MCF 10A (cell line): ENCODE measurements at regions of chr1 and their contacts with region 1.

Region 1: DNA sequence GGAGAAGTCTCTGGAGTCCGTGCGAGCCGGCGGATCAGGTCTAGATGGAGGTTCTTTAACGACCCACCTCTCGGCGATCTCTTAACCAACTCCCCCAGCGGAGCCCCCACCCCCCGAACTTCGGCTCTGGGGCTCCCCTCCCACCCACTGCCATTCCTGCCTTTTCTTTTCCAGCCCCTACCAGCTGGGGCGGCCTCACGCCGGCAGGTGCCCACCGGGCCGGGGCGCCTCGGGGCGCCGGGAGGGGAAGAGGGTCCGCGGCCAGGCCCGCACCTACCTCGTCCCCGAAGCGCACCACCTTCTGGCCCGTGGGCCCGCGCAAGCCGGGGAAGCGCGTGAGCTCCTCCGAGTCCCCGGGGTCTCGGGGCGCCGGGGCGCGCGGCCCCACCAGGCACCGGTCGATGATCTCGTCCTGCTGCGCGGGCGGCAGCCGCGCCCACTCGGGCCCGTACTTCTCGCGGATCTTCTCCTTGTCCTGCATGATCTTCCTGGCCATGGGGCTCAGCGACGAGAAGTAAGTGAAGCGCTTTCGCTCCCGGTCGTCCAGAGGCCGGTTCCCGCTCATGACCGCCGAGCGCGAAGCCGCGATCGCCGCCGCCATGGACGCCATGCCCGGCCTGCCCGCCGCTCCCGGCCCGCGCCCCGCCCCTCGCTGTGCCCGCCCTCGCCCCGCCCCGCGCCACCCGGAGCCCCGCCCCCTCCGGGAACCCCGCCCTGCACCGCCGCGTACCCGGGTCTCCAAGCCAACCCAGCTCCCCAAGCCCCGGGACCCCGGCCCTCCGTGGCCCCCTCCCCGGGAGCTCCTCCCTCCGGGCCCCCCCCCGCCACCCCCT is at the start of gene C1orf198:
- DNase-seq: peak; percentile 65
- H3K4me3 Mint-ChIP-seq: peak within 1 kb of the TSS; percentile 79
- H3K27ac Mint-ChIP-seq: peak within 1 kb of the TSS; percentile 69
- H3K4me1 Mint-ChIP-seq: peaks cover 22% of the 10 kb centered on the region
- H3K27me3 Mint-ChIP-seq: no peaks in the 10 kb centered on the region
- CTCF ChIP-seq: no peak
- total RNA-seq, gene C1orf198: 13.7 and 19.2 TPM in 2 replicates

Region 2: DNA sequence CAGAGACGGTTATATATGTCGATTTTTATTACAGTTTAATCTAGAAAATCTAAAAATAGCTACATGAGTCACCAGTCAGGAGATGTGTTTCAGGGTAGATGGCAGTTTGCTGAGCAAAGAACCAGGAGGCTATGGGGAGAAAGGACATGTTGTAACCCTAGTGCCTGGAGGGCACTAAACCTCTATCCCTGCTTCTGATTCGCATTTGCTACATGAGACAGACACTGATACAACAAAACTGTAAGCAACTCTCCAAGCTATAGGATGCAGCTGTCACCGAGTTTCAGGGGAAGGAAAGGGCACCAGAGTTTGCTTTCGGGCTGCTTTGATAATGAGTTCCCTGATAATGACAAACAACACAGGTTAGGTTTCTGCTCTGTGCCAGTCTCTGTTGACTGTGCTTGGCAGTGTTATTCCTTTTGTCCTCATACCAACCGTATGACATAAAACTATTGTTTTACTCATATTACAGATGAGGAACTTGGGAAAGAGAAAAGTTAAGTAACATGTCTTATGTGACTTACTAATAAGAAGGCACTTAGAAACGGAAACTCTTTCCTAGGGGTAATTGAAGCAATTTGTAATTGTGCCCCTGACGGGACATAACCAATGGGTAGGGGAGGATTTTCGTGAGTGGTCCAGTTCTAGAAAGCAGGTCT is 42.9 kb before region 1 on chr1:
- CTCF ChIA-PET with region 1: interaction called, 3 read pairs
- POLR2A ChIA-PET with region 1: interaction called, 23 read pairs
- intact Hi-C with region 1: no loop called
- DNase-seq: peak; percentile 97
- H3K4me3 Mint-ChIP-seq: peak overlapping the region; percentile 7
- H3K27ac Mint-ChIP-seq: peak overlapping the region; percentile 17
- H3K4me1 Mint-ChIP-seq: peaks cover 24% of the 10 kb centered on the region
- H3K27me3 Mint-ChIP-seq: peaks cover 20% of the 10 kb centered on the region
- CTCF ChIP-seq: no peak

Region 3: DNA sequence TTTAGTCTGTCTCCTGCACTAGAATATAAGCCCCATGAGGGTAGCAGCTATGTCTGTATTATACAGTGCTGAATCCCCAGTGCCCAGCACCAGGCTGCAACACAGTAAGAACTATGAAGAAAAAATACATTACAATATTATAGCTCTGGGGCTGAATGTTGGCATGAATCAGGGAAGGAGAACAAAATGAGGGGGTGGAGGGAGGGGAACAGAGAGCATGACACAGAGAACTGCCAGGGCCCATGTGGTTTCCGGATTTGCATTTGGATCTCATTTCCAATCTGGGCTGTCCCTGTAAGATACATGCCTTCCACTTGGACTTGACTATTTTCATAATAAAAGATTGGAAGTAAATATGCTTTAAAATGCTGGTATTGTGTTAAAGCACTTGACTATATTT is 35.6 kb before region 1 on chr1:
- CTCF ChIA-PET with region 1: no interaction called
- POLR2A ChIA-PET with region 1: interaction called, 13 read pairs
- intact Hi-C with region 1: no loop called
- DNase-seq: peak; percentile 65
- H3K4me3 Mint-ChIP-seq: no peak overlapping the region
- H3K27ac Mint-ChIP-seq: no peak overlapping the region
- H3K4me1 Mint-ChIP-seq: no peaks in the 10 kb centered on the region
- H3K27me3 Mint-ChIP-seq: no peaks in the 10 kb centered on the region
- CTCF ChIP-seq: no peak

Region 4: GRCh38 chr1:230843503-230844309 is 24.4 kb before region 1 on chr1:
- CTCF ChIA-PET with region 1: no interaction called
- POLR2A ChIA-PET with region 1: no interaction called
- intact Hi-C with region 1: no loop called
- DNase-seq: no peak
- H3K4me3 Mint-ChIP-seq: no peak overlapping the region
- H3K27ac Mint-ChIP-seq: no peak overlapping the region
- H3K4me1 Mint-ChIP-seq: no peaks in the 10 kb centered on the region
- H3K27me3 Mint-ChIP-seq: no peaks in the 10 kb centered on the region
- CTCF ChIP-seq: no peak

Region 5: GRCh38 chr1:230853731-230854130 is 14.4 kb before region 1 on chr1:
- CTCF ChIA-PET with region 1: interaction called, 5 read pairs
- POLR2A ChIA-PET with region 1: interaction called, 21 read pairs
- intact Hi-C with region 1: no loop called
- DNase-seq: no peak
- H3K4me3 Mint-ChIP-seq: no peak overlapping the region
- H3K27ac Mint-ChIP-seq: no peak overlapping the region
- H3K4me1 Mint-ChIP-seq: peaks cover 20% of the 10 kb centered on the region
- H3K27me3 Mint-ChIP-seq: no peaks in the 10 kb centered on the region
- CTCF ChIP-seq: no peak

Region 6: GRCh38 chr1:230878591-230878990 is 10.5 kb after region 1 on chr1:
- CTCF ChIA-PET with region 1: interaction called, 3 read pairs
- POLR2A ChIA-PET with region 1: interaction called, 11 read pairs
- intact Hi-C with region 1: no loop called
- DNase-seq: peak; percentile 36
- H3K4me3 Mint-ChIP-seq: no peak overlapping the region
- H3K27ac Mint-ChIP-seq: peak overlapping the region; percentile 6
- H3K4me1 Mint-ChIP-seq: peaks cover 10% of the 10 kb centered on the region
- H3K27me3 Mint-ChIP-seq: peaks cover 73% of the 10 kb centered on the region
- CTCF ChIP-seq: no peak

Region 7: DNA sequence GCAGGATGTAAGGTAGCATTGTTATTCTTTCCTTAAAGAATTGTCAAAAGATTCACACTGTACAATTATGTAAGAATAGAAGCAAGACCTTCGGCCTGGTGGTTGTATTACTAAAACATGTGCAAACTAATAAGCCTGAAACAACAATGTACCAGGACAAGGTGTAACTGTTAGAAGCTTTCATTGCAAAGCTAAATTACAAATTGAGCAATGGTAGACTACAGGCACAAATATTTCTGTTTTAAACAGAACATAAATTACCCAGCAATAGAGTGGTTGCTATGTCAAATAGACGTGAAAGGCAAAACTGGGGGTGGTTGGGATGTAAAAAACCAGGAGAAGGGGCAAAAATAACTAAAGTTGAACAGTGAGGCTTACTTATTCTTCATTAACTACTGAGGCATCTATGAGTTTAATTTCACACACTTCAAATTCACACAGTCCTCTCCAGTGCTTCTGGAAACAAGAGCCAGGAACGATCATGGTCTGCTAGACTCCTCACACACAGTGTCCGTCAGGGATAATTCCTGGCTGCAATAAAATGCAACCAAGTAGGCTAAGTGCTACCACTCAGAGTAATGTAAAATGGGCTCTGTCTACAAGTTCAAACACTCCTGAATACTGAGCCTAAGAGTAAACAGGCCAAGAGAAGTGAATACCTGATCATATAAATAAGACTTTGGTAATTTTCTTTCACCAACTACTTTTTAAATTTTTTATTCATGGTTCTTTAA is 39.5 kb after region 1 on chr1:
- CTCF ChIA-PET with region 1: no interaction called
- POLR2A ChIA-PET with region 1: no interaction called
- intact Hi-C with region 1: no loop called
- DNase-seq: no peak
- H3K4me3 Mint-ChIP-seq: no peak overlapping the region
- H3K27ac Mint-ChIP-seq: no peak overlapping the region
- H3K4me1 Mint-ChIP-seq: no peaks in the 10 kb centered on the region
- H3K27me3 Mint-ChIP-seq: no peaks in the 10 kb centered on the region
- CTCF ChIP-seq: no peak